ENCODE measurements at regions of chr7 and their contacts with region 1.

Region 1: GRCh38 chr7:128455551-128456254 is at the start of gene HILPDA:
- DNase-seq: peak; percentile 97
- ATAC-seq: peak; percentile 91
- H3K4me3 ChIP-seq: peak within 1 kb of the TSS; percentile 62 to 87 (median 82)
- H3K4me3 Mint-ChIP-seq: peak within 1 kb of the TSS; percentile 96
- H3K27ac ChIP-seq: peak within 1 kb of the TSS; percentile 88 to 93
- H3K27ac Mint-ChIP-seq: peak within 1 kb of the TSS; percentile 99
- H3K4me1 ChIP-seq: peaks cover 22 to 24% of the 10 kb centered on the region in 2 donors
- H3K4me1 Mint-ChIP-seq: peaks cover 26% of the 10 kb centered on the region
- H3K27me3 ChIP-seq: no peaks in the 10 kb centered on the region
- H3K27me3 Mint-ChIP-seq: no peaks in the 10 kb centered on the region
- CTCF ChIP-seq: no peak
- total RNA-seq, gene HILPDA: 10.1 and 10.7 TPM in 2 replicates

Region 2: DNA sequence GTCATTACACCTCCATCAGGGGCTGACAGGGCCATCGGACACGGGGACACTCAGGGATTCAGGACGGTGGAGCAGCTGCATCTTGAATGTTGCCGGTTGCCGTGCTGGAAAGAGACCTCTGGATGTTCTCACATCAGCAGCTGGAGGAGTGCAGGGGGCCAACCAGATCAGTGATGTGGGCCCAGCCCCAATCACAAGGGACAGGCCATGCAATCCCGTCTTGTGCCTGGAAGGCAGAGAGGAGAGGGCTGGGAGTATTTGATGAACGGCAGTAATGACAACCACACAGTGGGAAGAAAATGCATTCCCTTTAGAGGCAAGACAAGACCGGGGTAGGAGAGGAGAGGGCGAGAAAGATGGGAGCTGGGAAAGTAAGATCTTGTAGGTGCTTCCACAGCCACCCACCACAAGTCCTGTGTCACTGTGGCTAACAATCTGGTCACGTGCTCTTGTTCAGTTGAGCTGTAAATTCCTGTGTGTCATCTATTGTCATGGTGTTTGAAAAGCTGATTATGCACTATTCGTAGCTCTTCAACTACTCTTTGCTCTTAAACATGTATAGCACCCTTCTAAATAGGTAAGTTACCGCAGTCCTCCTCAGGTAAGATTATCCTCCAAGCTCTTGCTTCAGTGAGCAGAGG is 300.5 kb before region 1 on chr7:
- CTCF ChIA-PET with region 1: no interaction called
- POLR2A ChIA-PET with region 1: no interaction called
- intact Hi-C with region 1: no loop called
- DNase-seq: no peak
- ATAC-seq: no peak
- H3K4me3 ChIP-seq: no peak overlapping the region
- H3K4me3 Mint-ChIP-seq: no peak overlapping the region
- H3K27ac ChIP-seq: no peak overlapping the region
- H3K27ac Mint-ChIP-seq: no peak overlapping the region
- H3K4me1 ChIP-seq: no peaks in the 10 kb centered on the region
- H3K4me1 Mint-ChIP-seq: no peaks in the 10 kb centered on the region
- H3K27me3 ChIP-seq: peaks cover 0 to 11% (median 1%) of the 10 kb centered on the region in 4 experiments
- H3K27me3 Mint-ChIP-seq: peaks cover 35% of the 10 kb centered on the region
- CTCF ChIP-seq: no peak

Region 3: GRCh38 chr7:128387216-128388144 is 68.2 kb before region 1 on chr7:
- CTCF ChIA-PET with region 1: interaction called, 15 read pairs
- POLR2A ChIA-PET with region 1: no interaction called
- intact Hi-C with region 1: no loop called
- DNase-seq: peak; percentile 71
- ATAC-seq: peak; percentile 89
- H3K4me3 ChIP-seq: no peak overlapping the region
- H3K4me3 Mint-ChIP-seq: no peak overlapping the region
- H3K27ac ChIP-seq: no peak overlapping the region
- H3K27ac Mint-ChIP-seq: no peak overlapping the region
- H3K4me1 ChIP-seq: peaks cover 0 to 7% of the 10 kb centered on the region in 2 donors
- H3K4me1 Mint-ChIP-seq: peaks cover 6% of the 10 kb centered on the region
- H3K27me3 ChIP-seq: peaks cover 0 to 11% (median 3%) of the 10 kb centered on the region in 4 experiments
- H3K27me3 Mint-ChIP-seq: no peaks in the 10 kb centered on the region
- CTCF ChIP-seq: peak; percentile 86

Region 4: GRCh38 chr7:128409596-128410160 is 46.0 kb before region 1 on chr7 and contains the start of gene IMPDH1:
- CTCF ChIA-PET with region 1: interaction called, 48 read pairs
- POLR2A ChIA-PET with region 1: no interaction called
- intact Hi-C with region 1: loop called (anchors 1 kb)
- DNase-seq: peak; percentile 91
- ATAC-seq: peak; percentile 81
- H3K4me3 ChIP-seq: peak within 1 kb of the TSS; percentile 73 to 93 (median 86)
- H3K4me3 Mint-ChIP-seq: peak within 1 kb of the TSS; percentile 95
- H3K27ac ChIP-seq: peak within 1 kb of the TSS; percentile 64 to 68
- H3K27ac Mint-ChIP-seq: peak within 1 kb of the TSS; percentile 86
- H3K4me1 ChIP-seq: peaks cover 19 to 53% of the 10 kb centered on the region in 2 donors
- H3K4me1 Mint-ChIP-seq: peaks cover 38% of the 10 kb centered on the region
- H3K27me3 ChIP-seq: peaks cover 0 to 1% (median 0%) of the 10 kb centered on the region in 4 experiments
- H3K27me3 Mint-ChIP-seq: peaks cover 4% of the 10 kb centered on the region
- CTCF ChIP-seq: no peak
- total RNA-seq, gene IMPDH1: 52.3 and 54.9 TPM in 2 replicates

Region 5: GRCh38 chr7:128425850-128426249 is 29.9 kb before region 1 on chr7:
- CTCF ChIA-PET with region 1: interaction called, 541 read pairs
- POLR2A ChIA-PET with region 1: interaction called, 8 read pairs
- intact Hi-C with region 1: loop called (anchors 1 kb)
- DNase-seq: peak; percentile 71
- ATAC-seq: peak; percentile 69
- H3K4me3 ChIP-seq: no peak overlapping the region
- H3K4me3 Mint-ChIP-seq: no peak overlapping the region
- H3K27ac ChIP-seq: no peak overlapping the region
- H3K27ac Mint-ChIP-seq: no peak overlapping the region
- H3K4me1 ChIP-seq: no peaks in the 10 kb centered on the region
- H3K4me1 Mint-ChIP-seq: no peaks in the 10 kb centered on the region
- H3K27me3 ChIP-seq: no peaks in the 10 kb centered on the region
- H3K27me3 Mint-ChIP-seq: no peaks in the 10 kb centered on the region
- CTCF ChIP-seq: peak; percentile 76

Region 6: GRCh38 chr7:128443831-128444600 is 11.7 kb before region 1 on chr7:
- CTCF ChIA-PET with region 1: interaction called, 46 read pairs
- POLR2A ChIA-PET with region 1: interaction called, 5 read pairs
- intact Hi-C with region 1: no loop called
- DNase-seq: no peak
- ATAC-seq: peak; percentile 14
- H3K4me3 ChIP-seq: no peak overlapping the region
- H3K4me3 Mint-ChIP-seq: no peak overlapping the region
- H3K27ac ChIP-seq: no peak overlapping the region
- H3K27ac Mint-ChIP-seq: peak overlapping the region; percentile 41
- H3K4me1 ChIP-seq: peaks cover 3 to 11% of the 10 kb centered on the region in 2 donors
- H3K4me1 Mint-ChIP-seq: peaks cover 11% of the 10 kb centered on the region
- H3K27me3 ChIP-seq: no peaks in the 10 kb centered on the region
- H3K27me3 Mint-ChIP-seq: no peaks in the 10 kb centered on the region
- CTCF ChIP-seq: no peak

Region 7: GRCh38 chr7:128739048-128739962 is 283.6 kb after region 1 on chr7 and contains the start of gene CALU:
- CTCF ChIA-PET with region 1: no interaction called
- POLR2A ChIA-PET with region 1: no interaction called
- intact Hi-C with region 1: loop called (anchors 10 kb)
- DNase-seq: peak; percentile 93
- ATAC-seq: peak; percentile 96
- H3K4me3 ChIP-seq: peak within 1 kb of the TSS; percentile 58 to 96 (median 88)
- H3K4me3 Mint-ChIP-seq: peak within 1 kb of the TSS; percentile 100
- H3K27ac ChIP-seq: peak within 1 kb of the TSS; percentile 67 to 83
- H3K27ac Mint-ChIP-seq: peak within 1 kb of the TSS; percentile 93
- H3K4me1 ChIP-seq: peaks cover 34 to 48% of the 10 kb centered on the region in 2 donors
- H3K4me1 Mint-ChIP-seq: peaks cover 41% of the 10 kb centered on the region
- H3K27me3 ChIP-seq: no peaks in the 10 kb centered on the region
- H3K27me3 Mint-ChIP-seq: no peaks in the 10 kb centered on the region
- CTCF ChIP-seq: no peak
- total RNA-seq, gene CALU: 11.2 and 12.4 TPM in 2 replicates

Measured in B cell (primary cell).